AG04450 (cell line): ENCODE measurements at regions of chr19 and their contacts with region 1.

Region 1: DNA sequence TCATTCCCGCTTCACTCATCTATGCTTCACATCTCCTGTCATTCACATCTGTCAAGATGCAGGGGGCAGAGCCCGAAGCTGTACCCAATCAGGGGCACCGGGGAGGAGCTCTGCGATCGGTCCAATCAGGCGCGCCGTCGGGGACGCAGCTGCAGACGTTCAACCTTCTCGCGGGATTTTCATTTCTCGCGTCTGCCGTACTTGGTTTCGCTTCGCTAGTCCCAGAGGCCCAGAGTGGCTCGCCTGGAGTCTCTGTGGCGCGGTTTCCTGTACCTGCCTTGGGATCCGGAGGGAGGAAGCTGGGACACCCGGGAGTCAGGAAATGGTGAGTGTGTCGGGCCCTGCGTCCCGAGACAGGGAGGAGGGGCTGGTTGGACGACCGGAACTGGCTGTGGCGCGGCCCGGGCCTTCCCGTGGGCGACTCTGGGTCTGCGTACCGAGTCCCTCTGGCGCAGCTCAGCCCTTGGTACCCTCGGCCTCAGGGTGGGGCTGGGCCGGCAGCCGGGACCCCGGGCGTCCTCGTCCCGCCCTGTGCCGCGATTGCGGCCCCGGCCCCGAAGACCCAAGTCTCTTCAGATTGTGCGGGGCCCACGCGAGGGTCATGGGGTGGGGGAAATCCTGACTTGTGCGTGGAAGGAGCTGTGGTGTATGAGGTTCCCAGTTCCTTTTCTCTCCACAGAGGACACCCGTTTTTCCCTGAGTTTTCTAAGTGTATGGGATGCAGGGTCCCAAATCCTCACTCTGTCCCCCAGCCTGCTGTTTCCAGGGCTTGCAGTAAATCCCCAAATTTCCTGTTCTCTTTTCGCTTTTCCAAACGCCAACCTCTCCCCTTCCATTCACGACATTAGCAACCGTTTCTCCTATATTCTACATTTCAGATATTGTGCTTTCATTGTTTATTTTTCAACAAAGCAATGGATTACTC is at the start of gene ZNF136:
- DNase-seq: peak; percentile 80
- H3K4me3 ChIP-seq: peak within 1 kb of the TSS; percentile 92
- H3K27ac ChIP-seq: peak within 1 kb of the TSS; percentile 99
- H3K27me3 ChIP-seq: no peaks in the 10 kb centered on the region
- CTCF ChIP-seq: no peak
- polyA plus RNA-seq, gene ZNF136: 3.5 and 4.0 TPM in 2 replicates

Region 2: DNA sequence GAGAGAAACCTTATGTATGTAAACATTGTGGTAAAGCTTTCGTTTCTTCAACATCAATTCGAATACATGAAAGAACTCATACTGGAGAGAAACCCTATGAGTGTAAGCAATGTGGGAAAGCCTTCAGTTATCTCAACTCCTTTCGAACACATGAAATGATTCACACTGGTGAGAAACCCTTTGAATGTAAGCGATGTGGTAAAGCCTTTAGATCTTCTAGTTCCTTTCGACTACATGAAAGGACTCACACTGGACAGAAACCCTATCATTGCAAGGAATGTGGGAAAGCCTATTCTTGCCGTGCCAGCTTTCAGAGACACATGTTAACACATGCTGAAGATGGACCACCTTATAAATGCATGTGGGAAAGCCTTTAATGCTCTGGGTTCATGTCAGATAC is 24.5 kb after region 1 on chr19:
- CTCF ChIA-PET with region 1: no interaction called
- POLR2A ChIA-PET with region 1: no interaction called
- DNase-seq: no peak
- H3K4me3 ChIP-seq: no peak overlapping the region
- H3K27ac ChIP-seq: no peak overlapping the region
- H3K27me3 ChIP-seq: no peaks in the 10 kb centered on the region
- CTCF ChIP-seq: no peak

Region 3: DNA sequence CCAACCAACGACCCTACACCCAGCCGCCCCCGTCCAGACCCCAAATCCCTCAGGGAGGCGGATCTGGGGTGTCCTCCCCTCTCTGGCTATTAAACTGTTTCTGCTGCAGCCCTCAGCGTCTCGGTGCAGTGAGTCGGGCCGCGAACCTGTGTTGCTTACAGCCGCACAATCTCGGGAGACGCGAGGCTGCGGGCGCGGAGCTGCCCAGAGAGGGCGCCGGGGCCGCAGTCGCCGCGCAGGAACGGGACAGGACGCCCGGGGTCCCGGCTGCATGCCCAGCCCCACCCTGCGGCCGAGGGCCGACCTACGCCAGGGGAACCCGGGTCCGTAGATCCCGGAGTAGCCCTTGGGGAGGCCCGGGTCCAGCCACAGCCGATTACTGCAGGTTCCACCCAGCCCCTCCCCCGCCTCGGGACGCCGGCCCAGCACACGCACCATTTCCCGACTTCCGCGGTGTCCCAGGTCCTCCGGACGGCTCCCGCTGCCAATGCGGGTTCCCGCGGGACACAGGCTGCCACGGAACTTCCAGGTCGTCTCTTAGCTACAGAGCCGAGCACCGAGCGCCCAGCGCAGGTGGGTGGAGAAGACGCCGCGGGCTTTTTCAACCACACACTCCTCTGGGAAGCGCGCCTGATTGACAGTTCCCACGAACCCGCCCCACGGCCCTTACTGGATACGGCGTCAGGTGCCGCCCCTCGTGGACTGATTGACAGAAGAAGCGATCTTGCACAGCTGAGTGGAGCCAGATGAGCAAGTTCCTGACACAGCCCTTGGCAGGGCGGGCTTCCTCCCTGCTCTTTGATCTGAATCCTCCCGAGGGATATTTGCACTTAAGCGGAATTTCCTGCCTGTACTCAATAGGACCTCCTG is 237.7 kb after region 1 on chr19 and contains the start of gene ZNF799:
- CTCF ChIA-PET with region 1: no interaction called
- POLR2A ChIA-PET with region 1: interaction called, 10 read pairs
- DNase-seq: peak; percentile 79
- H3K4me3 ChIP-seq: peak within 1 kb of the TSS; percentile 80
- H3K27ac ChIP-seq: peak within 1 kb of the TSS; percentile 21
- H3K27me3 ChIP-seq: no peaks in the 10 kb centered on the region
- CTCF ChIP-seq: no peak
- polyA plus RNA-seq, gene ZNF799: 0.97 and 1.2 TPM in 2 replicates